Ovary (tissue), 10 donors: ENCODE measurements at regions of chr2 and their contacts with region 1.

Region 1: GRCh38 chr2:222743251-222743812 is 71.9 kb downstream of the MOGAT1 start:
- DNase-seq: peak in 3 of 5 donors; percentile 22 to 39 (median 31)
- H3K4me3 ChIP-seq: no peak overlapping the region
- H3K27ac ChIP-seq: peak overlapping the region in 1 of 2 donors; percentile 52
- H3K4me1 ChIP-seq: peaks cover 17% of the 10 kb centered on the region
- H3K27me3 ChIP-seq: no peaks in the 10 kb centered on the region
- CTCF ChIP-seq: no peak
- EP300 ChIP-seq: no peak
- POLR2A ChIP-seq: no peak

Region 2: GRCh38 chr2:222410534-222410933 is 332.8 kb before region 1 on chr2:
- intact Hi-C with region 1: no loop called
- DNase-seq: no peak
- H3K4me3 ChIP-seq: no peak overlapping the region
- H3K27ac ChIP-seq: no peak overlapping the region
- H3K4me1 ChIP-seq: no peaks in the 10 kb centered on the region
- H3K27me3 ChIP-seq: no peaks in the 10 kb centered on the region
- CTCF ChIP-seq: no peak
- EP300 ChIP-seq: no peak
- POLR2A ChIP-seq: no peak

Region 3: GRCh38 chr2:222760301-222760897 is 17.1 kb after region 1 on chr2:
- intact Hi-C with region 1: loop called in 1 of 4 experiments (anchors 1 kb)
- DNase-seq: no peak
- H3K4me3 ChIP-seq: no peak overlapping the region
- H3K27ac ChIP-seq: no peak overlapping the region
- H3K4me1 ChIP-seq: no peaks in the 10 kb centered on the region
- H3K27me3 ChIP-seq: no peaks in the 10 kb centered on the region
- CTCF ChIP-seq: no peak
- EP300 ChIP-seq: no peak
- POLR2A ChIP-seq: no peak